H1 (cell line): ENCODE measurements at regions of chr11 and their contacts with region 1.

Region 1: GRCh38 chr11:34174412-34175041 is 69.1 kb downstream of the NAT10 start:
- DNase-seq: peak; percentile 50 to 92
- H3K4me3 ChIP-seq: peak overlapping the region in 3 of 4 experiments; percentile 36 to 54 (median 42); a peak in 6 of 8 replicates
- H3K27ac ChIP-seq: no peak overlapping the region
- H3K4me1 ChIP-seq: peaks cover 0 to 4% (median 0%) of the 10 kb centered on the region in 4 experiments; a peak in 4 of 7 replicates
- H3K27me3 ChIP-seq: no peaks in the 10 kb centered on the region
- CTCF ChIP-seq: peak; percentile 92 to 97 (median 94)
- EP300 ChIP-seq: peak in 1 of 2 experiments; percentile 27; a peak in 1 of 3 replicates
- POLR2A ChIP-seq: no peak
- RAD21 ChIP-seq: peak; percentile 98 to 99

Region 2: GRCh38 chr11:34044664-34045485 is 129.7 kb before region 1 on chr11:
- CTCF ChIA-PET with region 1: no interaction called
- POLR2A ChIA-PET with region 1: no interaction called
- DNase-seq: peak; percentile 23 to 51
- H3K4me3 ChIP-seq: peak overlapping the region in 1 of 4 experiments; percentile 15; a peak in 1 of 8 replicates
- H3K27ac ChIP-seq: no peak overlapping the region
- H3K4me1 ChIP-seq: peaks cover 0 to 2% (median under 1%) of the 10 kb centered on the region in 4 experiments; a peak in 2 of 7 replicates
- H3K27me3 ChIP-seq: no peaks in the 10 kb centered on the region
- CTCF ChIP-seq: no peak
- EP300 ChIP-seq: no peak
- POLR2A ChIP-seq: no peak
- RAD21 ChIP-seq: no peak

Region 3: GRCh38 chr11:34126959-34127848 is 47.3 kb before region 1 on chr11:
- CTCF ChIA-PET with region 1: no interaction called
- POLR2A ChIA-PET with region 1: no interaction called
- DNase-seq: no peak
- H3K4me3 ChIP-seq: no peak overlapping the region
- H3K27ac ChIP-seq: no peak overlapping the region
- H3K4me1 ChIP-seq: no peaks in the 10 kb centered on the region
- H3K27me3 ChIP-seq: no peaks in the 10 kb centered on the region
- CTCF ChIP-seq: no peak
- EP300 ChIP-seq: no peak
- POLR2A ChIP-seq: no peak
- RAD21 ChIP-seq: no peak

Region 4: DNA sequence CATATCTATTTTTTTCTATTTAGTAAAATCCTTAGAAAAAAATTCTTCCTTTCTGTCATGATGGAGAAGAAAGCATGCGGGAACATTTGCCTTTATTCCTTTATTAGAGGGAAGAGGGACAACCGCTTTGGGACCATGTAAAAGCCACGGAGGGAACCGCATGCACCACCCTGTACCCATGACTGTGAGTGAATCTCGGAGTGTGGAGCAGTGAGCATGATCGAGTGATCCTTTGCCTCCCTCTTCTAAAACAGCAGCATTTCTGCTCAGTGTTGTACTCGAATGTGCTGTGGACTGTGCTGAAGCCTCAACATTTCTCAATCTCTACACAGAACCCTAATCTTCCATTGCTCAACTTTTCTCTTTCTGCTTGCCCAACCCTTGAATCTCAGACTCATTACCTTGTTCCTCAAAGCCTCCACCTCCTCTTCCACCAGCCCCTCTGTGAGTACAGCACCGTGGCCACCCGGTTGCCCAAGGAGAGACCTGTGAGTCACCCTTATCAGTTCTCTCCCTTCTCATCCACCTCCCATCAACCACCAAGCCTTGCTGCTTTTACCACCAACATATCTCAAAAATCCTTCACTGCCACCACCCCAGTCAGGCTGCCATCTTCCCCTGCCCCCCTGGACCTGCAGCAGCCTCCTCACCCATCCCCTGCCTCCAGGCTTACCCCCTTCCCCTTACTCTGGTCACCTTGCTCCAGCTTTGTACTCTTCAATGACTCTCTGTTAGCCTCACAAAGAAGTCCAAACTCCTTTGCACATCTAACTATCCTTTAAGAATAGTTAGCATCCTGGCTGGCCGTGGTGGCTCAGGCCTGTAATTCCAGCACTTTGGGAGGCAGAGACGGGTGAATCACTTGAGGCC is 34.0 kb after region 1 on chr11:
- CTCF ChIA-PET with region 1: interaction called, 11 read pairs
- POLR2A ChIA-PET with region 1: no interaction called
- DNase-seq: no peak
- H3K4me3 ChIP-seq: no peak overlapping the region
- H3K27ac ChIP-seq: no peak overlapping the region
- H3K4me1 ChIP-seq: peaks cover 3 to 23% (median 13%) of the 10 kb centered on the region in 4 experiments
- H3K27me3 ChIP-seq: no peaks in the 10 kb centered on the region
- CTCF ChIP-seq: no peak
- EP300 ChIP-seq: no peak
- POLR2A ChIP-seq: no peak
- RAD21 ChIP-seq: no peak

Region 5: DNA sequence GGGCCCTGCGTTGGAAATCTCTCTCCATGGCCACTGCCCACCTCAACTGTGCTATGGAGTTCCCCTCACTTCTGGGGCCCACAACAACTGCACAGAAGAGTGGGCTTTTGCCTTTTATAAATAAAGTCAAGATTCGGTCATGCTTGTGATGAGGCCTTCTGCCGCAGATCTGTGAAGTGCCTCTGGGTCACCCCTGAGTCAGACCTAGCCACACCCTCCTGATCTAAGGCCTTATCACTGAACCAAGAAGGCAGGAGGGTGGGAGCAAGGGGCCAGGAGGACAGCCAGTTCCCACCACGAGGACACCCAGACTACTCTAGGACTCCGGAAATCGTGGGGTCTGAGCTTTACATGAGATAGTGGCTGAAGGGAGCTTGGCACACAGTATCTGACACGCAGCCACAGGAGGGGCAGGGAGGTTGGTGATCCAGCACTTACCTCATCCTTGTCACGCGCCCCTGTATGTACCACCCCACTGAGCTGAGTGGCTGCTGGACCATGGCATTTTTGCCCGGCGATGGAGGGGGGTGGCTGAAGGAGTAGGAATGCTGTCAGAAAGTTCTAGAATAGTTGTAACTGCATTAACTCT is 67.6 kb after region 1 on chr11:
- CTCF ChIA-PET with region 1: interaction called, 17 read pairs
- POLR2A ChIA-PET with region 1: no interaction called
- DNase-seq: no peak
- H3K4me3 ChIP-seq: no peak overlapping the region
- H3K27ac ChIP-seq: no peak overlapping the region
- H3K4me1 ChIP-seq: peaks cover 0 to 5% (median 2%) of the 10 kb centered on the region in 4 experiments; a peak in 3 of 7 replicates
- H3K27me3 ChIP-seq: no peaks in the 10 kb centered on the region
- CTCF ChIP-seq: no peak
- EP300 ChIP-seq: no peak
- POLR2A ChIP-seq: no peak
- RAD21 ChIP-seq: no peak

Region 6: GRCh38 chr11:34357701-34358257 is 183.3 kb after region 1 on chr11 and contains the start of gene ABTB2:
- CTCF ChIA-PET with region 1: interaction called, 63 read pairs
- POLR2A ChIA-PET with region 1: interaction called, 18 read pairs
- DNase-seq: peak; percentile 96 to 98
- H3K4me3 ChIP-seq: peak within 1 kb of the TSS; percentile 52 to 87 (median 68)
- H3K27ac ChIP-seq: peak within 1 kb of the TSS; percentile 84; the same call in 1 of the 2 replicates
- H3K4me1 ChIP-seq: peaks cover 0 to 21% (median 8%) of the 10 kb centered on the region in 4 experiments; a peak in 5 of 7 replicates
- H3K27me3 ChIP-seq: peaks cover 5 to 31% (median 24%) of the 10 kb centered on the region in 4 experiments
- CTCF ChIP-seq: no peak
- EP300 ChIP-seq: no peak
- POLR2A ChIP-seq: peak; percentile 66 to 76
- RAD21 ChIP-seq: 0 out of 4 replicates have a peak, but pooled peaks of 1 of the 2 experiments have one; percentile 6
- total RNA-seq, gene ABTB2: 10.2 and 10.6 TPM in 2 replicates

Region 7: GRCh38 chr11:34492806-34493414 is 318.4 kb after region 1 on chr11:
- CTCF ChIA-PET with region 1: interaction called, 11 read pairs
- POLR2A ChIA-PET with region 1: no interaction called
- DNase-seq: peak; percentile 7 to 65
- H3K4me3 ChIP-seq: no peak overlapping the region
- H3K27ac ChIP-seq: no peak overlapping the region
- H3K4me1 ChIP-seq: no peaks in the 10 kb centered on the region
- H3K27me3 ChIP-seq: no peaks in the 10 kb centered on the region
- CTCF ChIP-seq: peak in 2 of 3 experiments; percentile 52 to 67; a peak in 3 of 4 replicates
- EP300 ChIP-seq: no peak
- POLR2A ChIP-seq: no peak
- RAD21 ChIP-seq: peak; percentile 67 to 74